Activated B cell treated with CpG ODN at 0.5 μM for 24 hours (primary cell): ENCODE measurements at regions of chr1 and their contacts with region 1.

Region 1: DNA sequence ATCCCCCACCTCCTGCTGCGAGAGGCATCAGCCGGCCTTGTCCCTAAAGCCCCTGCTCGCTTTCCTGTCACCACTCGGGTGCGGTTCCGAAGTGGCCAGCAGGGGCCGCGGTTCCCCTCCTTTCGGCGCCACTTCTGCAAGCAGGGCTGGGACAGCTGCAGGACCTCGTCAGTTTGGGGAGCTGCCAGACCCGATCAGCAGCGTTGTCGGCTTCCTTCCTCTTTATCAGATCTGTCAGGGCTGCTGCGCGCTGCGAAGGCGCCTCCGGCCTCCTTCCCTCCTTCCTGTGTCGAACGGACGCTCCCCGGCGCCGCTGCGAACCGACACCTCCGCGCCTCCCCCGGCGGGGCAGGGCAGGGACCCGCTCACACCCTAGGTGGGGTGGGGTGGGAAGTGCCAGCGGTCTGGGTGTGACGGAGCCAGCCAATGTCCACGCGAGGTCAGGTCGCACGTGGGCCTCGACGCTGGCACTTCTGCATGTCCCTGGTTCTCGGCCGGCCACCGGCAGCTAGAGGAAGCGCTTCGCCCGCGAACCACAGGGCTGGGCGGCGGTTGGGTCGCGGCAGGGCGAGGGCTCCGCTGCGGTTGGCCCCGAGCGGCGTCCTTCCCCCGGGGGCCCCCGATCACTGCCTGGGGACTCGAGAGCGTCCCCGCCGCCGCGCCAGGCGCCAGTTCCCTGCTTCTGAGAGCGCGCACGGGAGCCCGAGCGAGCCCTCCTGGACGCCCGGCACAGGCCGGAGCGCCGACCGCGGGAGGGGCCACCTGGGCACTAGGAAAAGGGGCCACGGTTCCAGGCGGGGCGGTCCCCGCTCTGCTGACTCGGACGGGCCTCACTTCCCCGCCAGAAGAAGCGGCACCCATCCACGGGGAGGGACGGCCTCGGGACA is 81.8 kb downstream of the RUNX3 start:
- DNase-seq: peak; percentile 91
- ATAC-seq: peak; percentile 95
- H3K4me3 Mint-ChIP-seq: peak overlapping the region; percentile 74
- H3K27ac Mint-ChIP-seq: peak overlapping the region; percentile 50
- H3K4me1 Mint-ChIP-seq: peaks cover 18% of the 10 kb centered on the region
- H3K27me3 Mint-ChIP-seq: no peaks in the 10 kb centered on the region
- CTCF ChIP-seq: peak; percentile 54

Region 2: DNA sequence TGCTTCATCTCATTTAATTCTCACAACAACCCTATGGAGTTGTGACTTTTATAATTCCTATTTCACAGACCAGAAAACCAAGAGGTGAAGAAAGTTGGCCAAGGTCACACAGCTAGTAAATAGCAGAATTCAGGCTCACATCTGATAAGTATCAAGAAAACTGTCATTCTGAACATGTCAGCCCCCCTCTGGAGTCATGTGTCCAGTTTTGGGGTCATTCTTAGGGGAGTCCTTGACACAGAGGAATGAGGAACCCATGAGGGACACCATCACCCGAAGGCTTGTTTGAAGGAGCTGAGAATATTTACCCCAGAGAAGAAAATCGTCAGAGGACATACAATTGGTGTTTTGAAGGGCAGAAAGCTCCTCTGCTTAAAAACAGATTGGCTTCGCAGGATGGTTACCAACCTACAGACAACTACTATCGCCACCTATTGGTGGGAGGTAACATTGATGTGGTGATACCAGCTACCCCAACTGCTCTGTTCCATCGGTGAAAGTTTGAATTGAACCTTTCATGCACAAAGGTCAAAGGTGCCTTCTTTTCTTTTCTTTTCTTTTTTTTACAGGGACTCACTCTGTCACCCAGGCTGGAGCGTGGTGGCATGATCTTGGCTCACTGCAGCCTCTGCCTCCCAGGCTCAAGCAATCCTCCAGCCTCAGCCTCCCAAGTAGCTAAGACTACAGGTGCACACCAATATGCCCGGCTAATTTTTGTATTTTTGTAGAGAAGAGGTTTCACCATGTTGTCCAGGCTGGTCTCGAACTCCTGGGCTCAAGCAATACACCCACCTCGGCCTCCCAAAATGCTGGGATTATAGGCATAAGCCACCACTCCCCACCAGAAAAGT is 261.0 kb before region 1 on chr1:
- CTCF ChIA-PET with region 1: no interaction called
- POLR2A ChIA-PET with region 1: no interaction called
- intact Hi-C with region 1: no loop called
- DNase-seq: no peak
- ATAC-seq: peak; percentile 96
- H3K4me3 Mint-ChIP-seq: no peak overlapping the region
- H3K27ac Mint-ChIP-seq: no peak overlapping the region
- H3K4me1 Mint-ChIP-seq: peaks cover 4% of the 10 kb centered on the region
- H3K27me3 Mint-ChIP-seq: peaks cover 5% of the 10 kb centered on the region
- CTCF ChIP-seq: no peak

Region 3: DNA sequence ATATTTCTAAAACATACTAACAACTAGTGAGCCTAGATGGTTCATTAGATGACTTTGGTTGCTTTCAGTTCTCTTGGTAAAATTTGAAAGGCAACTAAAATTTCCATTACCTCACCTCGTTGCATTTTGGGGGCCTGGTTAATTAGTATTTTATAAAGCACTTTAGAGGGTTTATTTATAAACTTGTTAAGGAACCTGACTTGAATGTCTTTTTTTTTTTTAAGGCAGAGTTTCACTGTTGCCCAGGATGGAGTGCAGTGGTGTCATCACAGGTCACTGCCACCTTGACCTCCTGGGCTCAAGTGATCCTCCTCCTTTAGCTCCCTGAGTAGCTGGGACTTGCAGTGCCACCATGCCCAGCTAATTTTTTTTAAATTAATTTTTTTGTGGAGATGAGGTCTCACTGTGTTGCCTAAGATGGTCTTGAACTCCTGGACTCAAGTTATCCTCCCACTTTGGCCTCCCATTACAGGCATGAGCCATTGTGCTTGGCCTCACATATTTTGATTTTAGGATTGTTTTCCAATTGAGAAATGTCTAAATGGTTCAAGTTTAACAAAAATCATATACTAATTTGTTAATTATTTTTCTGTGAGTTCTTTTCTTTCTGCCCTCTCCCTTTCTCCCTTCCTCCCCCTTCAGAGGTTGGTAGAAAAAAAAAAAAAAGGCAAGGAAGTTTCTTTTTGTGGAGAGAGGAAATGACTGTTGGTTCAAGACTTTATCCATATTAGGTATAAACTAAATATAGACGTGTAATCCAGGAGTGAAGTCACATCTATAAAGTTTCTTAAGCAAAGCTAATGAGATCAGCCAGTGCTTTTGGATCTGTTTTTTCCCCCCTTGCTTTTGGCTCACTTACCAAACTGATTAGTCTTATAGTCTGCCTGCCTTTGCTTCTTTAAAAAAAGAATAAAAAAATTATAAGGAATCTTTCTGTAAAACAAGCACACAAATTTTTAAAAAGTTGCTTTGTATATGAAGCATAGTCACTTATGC is 78.3 kb before region 1 on chr1:
- CTCF ChIA-PET with region 1: no interaction called
- POLR2A ChIA-PET with region 1: no interaction called
- intact Hi-C with region 1: no loop called
- DNase-seq: no peak
- ATAC-seq: peak; percentile 49
- H3K4me3 Mint-ChIP-seq: no peak overlapping the region
- H3K27ac Mint-ChIP-seq: no peak overlapping the region
- H3K4me1 Mint-ChIP-seq: peaks cover 57% of the 10 kb centered on the region
- H3K27me3 Mint-ChIP-seq: no peaks in the 10 kb centered on the region
- CTCF ChIP-seq: no peak

Region 4: DNA sequence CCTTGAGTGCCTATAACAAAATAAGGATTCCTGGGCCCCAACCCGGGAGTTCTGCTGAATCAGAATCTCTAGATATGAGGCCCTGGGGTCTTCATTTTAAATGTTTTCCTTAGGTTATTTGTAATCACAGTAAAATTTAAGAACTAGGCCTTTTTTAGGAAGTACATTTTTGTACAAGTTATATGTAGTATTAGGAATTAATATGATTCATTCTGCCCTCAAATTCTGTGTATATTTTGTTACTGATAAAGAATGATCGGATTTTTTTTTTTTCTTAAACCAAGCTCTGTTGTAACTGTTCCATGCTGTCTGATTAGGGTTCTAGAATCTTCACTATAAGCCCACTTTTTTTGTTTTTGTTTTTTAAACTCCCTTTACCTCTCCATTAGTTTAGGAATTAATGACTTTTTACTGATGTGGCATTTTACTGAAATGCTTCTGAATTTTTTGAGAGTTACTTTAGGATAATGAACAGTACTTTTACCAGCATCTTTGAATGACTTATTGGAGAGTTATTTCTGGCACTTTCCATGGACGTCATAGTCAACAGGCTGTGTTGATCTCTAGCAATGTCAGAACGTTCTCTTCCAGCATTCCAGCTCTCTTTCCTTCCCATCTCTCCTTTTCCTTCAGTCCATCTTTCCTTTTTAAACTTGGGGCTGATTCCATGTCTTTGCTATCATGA is 54.6 kb before region 1 on chr1:
- CTCF ChIA-PET with region 1: no interaction called
- POLR2A ChIA-PET with region 1: no interaction called
- intact Hi-C with region 1: no loop called
- DNase-seq: no peak
- ATAC-seq: no peak
- H3K4me3 Mint-ChIP-seq: no peak overlapping the region
- H3K27ac Mint-ChIP-seq: peak overlapping the region; percentile 25
- H3K4me1 Mint-ChIP-seq: peaks cover 39% of the 10 kb centered on the region
- H3K27me3 Mint-ChIP-seq: no peaks in the 10 kb centered on the region
- CTCF ChIP-seq: no peak

Region 5: GRCh38 chr1:24897767-24898483 is 49.7 kb after region 1 on chr1:
- CTCF ChIA-PET with region 1: interaction called, 14 read pairs
- POLR2A ChIA-PET with region 1: interaction called, 4 read pairs
- intact Hi-C with region 1: loop called (anchors 1 kb)
- DNase-seq: peak; percentile 32
- ATAC-seq: peak; percentile 76
- H3K4me3 Mint-ChIP-seq: no peak overlapping the region
- H3K27ac Mint-ChIP-seq: peak overlapping the region; percentile 59
- H3K4me1 Mint-ChIP-seq: peaks cover 36% of the 10 kb centered on the region
- H3K27me3 Mint-ChIP-seq: no peaks in the 10 kb centered on the region
- CTCF ChIP-seq: no peak

Region 6: DNA sequence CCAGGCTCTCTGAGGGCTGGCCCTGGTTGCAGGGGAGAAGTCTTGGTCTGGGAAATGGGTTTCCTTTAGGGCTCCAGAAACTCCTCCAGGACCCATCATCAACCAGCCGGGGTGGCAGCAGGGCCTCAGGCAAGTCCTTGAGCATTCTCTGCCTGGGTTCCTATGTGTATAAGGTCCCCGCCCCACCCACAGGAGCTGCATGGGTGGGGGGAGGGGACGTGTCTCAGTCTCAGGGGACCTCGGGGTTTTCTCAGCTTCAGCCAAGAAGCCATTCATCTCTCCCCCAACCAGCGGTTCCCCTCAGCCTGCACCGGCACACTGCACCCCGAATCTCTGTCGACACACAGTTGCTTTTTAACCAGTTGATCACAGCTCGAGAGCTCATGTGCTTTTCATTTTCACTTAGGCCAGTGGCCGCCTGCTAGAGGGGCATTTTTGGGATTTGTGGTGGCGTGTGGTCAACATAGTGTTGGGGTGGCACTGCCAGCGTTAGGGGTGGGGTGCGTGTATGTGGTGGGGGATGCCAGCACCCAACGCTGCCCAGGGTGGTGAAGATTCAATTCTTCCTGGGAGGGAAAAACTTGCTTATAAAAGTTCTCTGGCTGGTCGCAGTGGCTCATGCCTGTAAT is 75.4 kb after region 1 on chr1:
- CTCF ChIA-PET with region 1: interaction called, 19 read pairs
- POLR2A ChIA-PET with region 1: interaction called, 47 read pairs
- intact Hi-C with region 1: no loop called
- DNase-seq: peak; percentile 50
- ATAC-seq: peak; percentile 78
- H3K4me3 Mint-ChIP-seq: peak overlapping the region; percentile 74
- H3K27ac Mint-ChIP-seq: peak overlapping the region; percentile 96
- H3K4me1 Mint-ChIP-seq: peaks cover 79% of the 10 kb centered on the region
- H3K27me3 Mint-ChIP-seq: no peaks in the 10 kb centered on the region
- CTCF ChIP-seq: no peak

Region 7: DNA sequence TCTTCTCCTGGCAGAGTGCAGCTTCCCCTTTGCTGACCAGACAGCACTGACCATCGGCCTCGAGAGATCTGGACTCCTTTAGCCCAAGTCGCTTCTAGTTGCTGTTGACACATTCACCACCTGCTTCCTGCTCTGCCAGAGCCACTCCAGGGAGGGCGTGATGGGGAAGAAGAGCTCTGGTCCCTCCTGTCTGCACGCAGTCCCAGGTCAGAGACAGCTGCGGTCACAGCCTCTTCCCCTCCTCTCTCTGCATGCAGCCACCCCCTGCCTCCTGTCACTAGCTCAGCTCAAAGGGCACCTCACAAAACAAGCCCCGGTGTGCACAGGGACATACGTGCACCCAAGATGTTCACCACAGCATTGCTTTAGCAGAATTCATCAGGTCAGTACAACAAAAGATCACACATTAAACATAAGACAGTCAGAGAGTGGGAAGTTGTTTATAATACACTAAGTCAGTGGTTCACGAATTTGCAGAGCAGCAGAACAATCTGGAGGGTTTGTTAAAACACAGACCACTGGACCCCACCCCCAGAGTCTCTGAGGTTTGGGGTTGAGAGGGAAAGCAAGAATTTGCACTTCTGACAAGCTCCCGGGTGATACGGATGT is 251.2 kb after region 1 on chr1:
- CTCF ChIA-PET with region 1: interaction called, 33 read pairs
- POLR2A ChIA-PET with region 1: interaction called, 5 read pairs
- intact Hi-C with region 1: loop called (anchors 1 kb)
- DNase-seq: no peak
- ATAC-seq: peak; percentile 18
- H3K4me3 Mint-ChIP-seq: no peak overlapping the region
- H3K27ac Mint-ChIP-seq: no peak overlapping the region
- H3K4me1 Mint-ChIP-seq: peaks cover 40% of the 10 kb centered on the region
- H3K27me3 Mint-ChIP-seq: no peaks in the 10 kb centered on the region
- CTCF ChIP-seq: no peak

Region 8: GRCh38 chr1:25148673-25149300 is 300.5 kb after region 1 on chr1:
- CTCF ChIA-PET with region 1: interaction called, 12 read pairs
- POLR2A ChIA-PET with region 1: interaction called, 3 read pairs
- intact Hi-C with region 1: loop called (anchors 1 kb)
- DNase-seq: no peak
- ATAC-seq: peak; percentile 40
- H3K4me3 Mint-ChIP-seq: no peak overlapping the region
- H3K27ac Mint-ChIP-seq: no peak overlapping the region
- H3K4me1 Mint-ChIP-seq: peaks cover 15% of the 10 kb centered on the region
- H3K27me3 Mint-ChIP-seq: peaks cover 32% of the 10 kb centered on the region
- CTCF ChIP-seq: no peak

Region 9: DNA sequence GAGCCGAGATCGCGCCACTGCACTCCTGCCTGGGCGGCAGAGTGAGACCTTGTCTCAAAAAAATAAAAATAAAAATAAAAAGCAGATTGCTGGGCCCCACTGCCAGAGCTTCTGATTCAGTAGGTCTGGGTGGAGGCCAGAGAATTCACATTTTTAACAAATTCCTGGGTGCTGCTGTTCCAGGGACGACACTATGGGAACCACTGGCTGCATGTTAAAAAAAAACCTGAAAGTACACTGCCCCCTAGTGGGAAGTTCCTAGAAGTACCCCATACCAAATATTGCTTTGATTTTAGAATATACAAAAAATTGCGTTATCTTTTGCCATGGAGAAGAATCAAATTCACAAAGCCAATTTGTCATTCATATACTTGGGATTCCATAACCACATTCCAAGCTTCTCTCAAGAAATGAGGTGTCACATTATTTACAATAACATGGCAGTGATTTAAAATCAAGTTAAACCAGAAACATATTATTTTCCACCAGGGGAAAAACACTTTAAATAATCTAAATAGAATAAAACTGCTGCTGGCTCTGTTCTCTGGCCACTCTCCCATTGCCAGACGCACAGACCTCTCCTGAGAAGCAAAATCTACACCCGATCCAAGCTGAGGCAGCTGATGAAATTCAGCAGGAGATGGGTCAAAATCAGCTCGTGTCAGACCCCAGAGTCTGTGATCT is 356.7 kb after region 1 on chr1:
- CTCF ChIA-PET with region 1: interaction called, 79 read pairs
- POLR2A ChIA-PET with region 1: interaction called, 8 read pairs
- intact Hi-C with region 1: loop called (anchors 1 kb)
- DNase-seq: no peak
- ATAC-seq: peak; percentile 47
- H3K4me3 Mint-ChIP-seq: no peak overlapping the region
- H3K27ac Mint-ChIP-seq: no peak overlapping the region
- H3K4me1 Mint-ChIP-seq: no peaks in the 10 kb centered on the region
- H3K27me3 Mint-ChIP-seq: peaks cover 2% of the 10 kb centered on the region
- CTCF ChIP-seq: no peak